ENCODE measurements at regions of chr4 and their contacts with region 1.

Region 1: DNA sequence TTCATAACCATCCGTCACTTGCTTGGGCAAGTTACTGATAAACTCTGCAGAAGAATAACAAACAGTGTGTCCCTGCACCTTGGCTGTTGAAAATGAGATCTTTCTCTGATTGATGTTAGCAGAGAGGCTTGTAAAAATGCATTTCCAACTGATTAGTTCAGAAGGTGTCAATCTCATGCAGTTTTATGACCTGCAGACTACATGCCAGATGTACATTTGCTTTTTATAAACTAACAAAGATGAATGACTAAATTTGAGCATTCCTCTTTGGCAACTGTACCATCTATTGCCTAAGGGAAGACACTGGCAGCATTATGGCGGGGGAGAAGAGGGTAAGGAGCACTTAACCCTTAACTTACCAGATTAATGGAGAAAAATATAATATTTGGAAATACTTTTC is 192.8 kb downstream of the DCTD start:
- DNase-seq: no peak
- ATAC-seq: no peak
- H3K4me3 ChIP-seq: no peak overlapping the region
- H3K27ac ChIP-seq: no peak overlapping the region
- H3K4me1 ChIP-seq: no peaks in the 10 kb centered on the region
- H3K27me3 ChIP-seq: peaks cover 0 to 5% of the 10 kb centered on the region in 2 experiments; a peak in 1 of 5 replicates
- CTCF ChIP-seq: no peak
- EP300 ChIP-seq: no peak
- POLR2A ChIP-seq: no peak
- RAD21 ChIP-seq: no peak

Region 2: GRCh38 chr4:182738283-182739047 is 14.1 kb after region 1 on chr4:
- CTCF ChIA-PET with region 1: no interaction called
- POLR2A ChIA-PET with region 1: no interaction called
- in situ Hi-C with region 1: no loop called
- intact Hi-C with region 1: no loop called
- DNase-seq: no peak
- ATAC-seq: no peak
- H3K4me3 ChIP-seq: no peak overlapping the region
- H3K27ac ChIP-seq: no peak overlapping the region
- H3K4me1 ChIP-seq: no peaks in the 10 kb centered on the region
- H3K27me3 ChIP-seq: no peaks in the 10 kb centered on the region
- CTCF ChIP-seq: no peak
- EP300 ChIP-seq: no peak
- POLR2A ChIP-seq: no peak
- RAD21 ChIP-seq: no peak

Region 3: DNA sequence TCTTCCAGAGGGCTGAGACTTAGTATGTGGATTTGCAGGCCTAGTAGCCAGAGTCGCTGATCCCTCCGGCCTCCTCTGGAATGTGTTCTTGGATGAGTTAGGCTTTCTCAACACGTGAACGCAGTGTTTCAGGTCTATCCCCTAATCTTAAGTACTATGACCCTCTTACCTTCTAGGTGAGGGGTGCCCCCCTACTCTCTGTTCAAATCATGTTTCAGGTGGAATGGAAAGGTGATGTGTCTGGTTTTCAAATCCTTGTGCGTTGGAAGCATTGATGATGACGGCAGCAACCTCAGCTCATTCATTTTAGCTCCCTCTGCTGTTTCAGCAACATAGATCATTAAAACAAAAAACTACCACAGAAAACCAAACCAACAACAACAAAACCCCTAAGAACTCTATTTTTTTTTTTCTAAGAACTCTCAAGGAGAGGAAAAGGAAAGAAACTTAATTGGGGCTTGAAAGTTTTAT is 878.2 kb after region 1 on chr4:
- CTCF ChIA-PET with region 1: no interaction called
- POLR2A ChIA-PET with region 1: no interaction called
- in situ Hi-C with region 1: loop called (anchors 10 kb)
- intact Hi-C with region 1: no loop called
- DNase-seq: peak in 1 of 4 experiments; percentile 28
- ATAC-seq: 0 out of 3 replicates have a peak, but pooled peaks have one; percentile 41
- H3K4me3 ChIP-seq: no peak overlapping the region
- H3K27ac ChIP-seq: no peak overlapping the region
- H3K4me1 ChIP-seq: no peaks in the 10 kb centered on the region; a peak in 1 of 5 replicates
- H3K27me3 ChIP-seq: peaks cover 2 to 15% of the 10 kb centered on the region in 2 experiments; a peak in 3 of 5 replicates
- CTCF ChIP-seq: peak; percentile 26 to 55 (median 27); a peak in 3 of 6 replicates
- EP300 ChIP-seq: no peak
- POLR2A ChIP-seq: no peak
- RAD21 ChIP-seq: peak; percentile 53 to 58

Measured in K562 (cell line).